Thyroid gland (tissue), 4 donors: ENCODE measurements at regions of chr1 and their contacts with region 1.

Region 1: GRCh38 chr1:181424786-181425403 is 58.4 kb upstream of the CACNA1E start:
- DNase-seq: peak; percentile 78 to 85
- H3K4me3 ChIP-seq: no peak overlapping the region
- H3K27ac ChIP-seq: no peak overlapping the region
- H3K4me1 ChIP-seq: peaks cover 0 to 3% of the 10 kb centered on the region in 2 donors
- H3K27me3 ChIP-seq: no peaks in the 10 kb centered on the region
- CTCF ChIP-seq: peak; percentile 92 to 99 (median 98)
- POLR2A ChIP-seq: no peak

Region 2: GRCh38 chr1:181189691-181190363 is 235.1 kb before region 1 on chr1:
- intact Hi-C with region 1: loop called (anchors 2 kb)
- DNase-seq: peak; percentile 67 to 71
- H3K4me3 ChIP-seq: no peak overlapping the region
- H3K27ac ChIP-seq: no peak overlapping the region
- H3K4me1 ChIP-seq: peaks cover 0 to 8% of the 10 kb centered on the region in 2 donors
- H3K27me3 ChIP-seq: no peaks in the 10 kb centered on the region
- CTCF ChIP-seq: peak; percentile 83 to 100 (median 98)
- POLR2A ChIP-seq: no peak

Region 3: GRCh38 chr1:181318022-181318857 is 106.7 kb before region 1 on chr1:
- intact Hi-C with region 1: loop called (anchors 10 kb)
- DNase-seq: peak in 1 of 2 donors; percentile 3
- H3K4me3 ChIP-seq: no peak overlapping the region
- H3K27ac ChIP-seq: no peak overlapping the region
- H3K4me1 ChIP-seq: peaks cover 5 to 14% of the 10 kb centered on the region in 2 donors
- H3K27me3 ChIP-seq: peaks cover 7% of the 10 kb centered on the region
- CTCF ChIP-seq: no peak
- POLR2A ChIP-seq: no peak